Spleen (tissue), 13 donors: ENCODE measurements at regions of chr19 and their contacts with region 1.

Region 1: GRCh38 chr19:53365134-53365898 is at the start of gene ZNF525:
- DNase-seq: peak; percentile 99
- H3K4me3 ChIP-seq: peak within 1 kb of the TSS; percentile 48 to 90 (median 68)
- H3K27ac ChIP-seq: peak within 1 kb of the TSS; percentile 30 to 88 (median 79)
- H3K4me1 ChIP-seq: peaks cover 0 to 20% (median 14%) of the 10 kb centered on the region in 6 donors
- H3K27me3 ChIP-seq: no peaks in the 10 kb centered on the region
- CTCF ChIP-seq: peak in 9 of 11 experiments; percentile 8 to 80 (median 62)
- POLR2A ChIP-seq: no peak
- total RNA-seq, gene ZNF525: 7.9 to 20.6 (median 15.3) TPM

Region 2: GRCh38 chr19:53195265-53195903 is 169.9 kb before region 1 on chr19:
- intact Hi-C with region 1: loop called (anchors 10 kb)
- DNase-seq: peak; percentile 75
- H3K4me3 ChIP-seq: no peak overlapping the region
- H3K27ac ChIP-seq: no peak overlapping the region
- H3K4me1 ChIP-seq: peaks cover 4 to 48% (median 30%) of the 10 kb centered on the region in 6 donors
- H3K27me3 ChIP-seq: no peaks in the 10 kb centered on the region
- CTCF ChIP-seq: peak; percentile 76 to 95 (median 90)
- POLR2A ChIP-seq: no peak

Region 3: DNA sequence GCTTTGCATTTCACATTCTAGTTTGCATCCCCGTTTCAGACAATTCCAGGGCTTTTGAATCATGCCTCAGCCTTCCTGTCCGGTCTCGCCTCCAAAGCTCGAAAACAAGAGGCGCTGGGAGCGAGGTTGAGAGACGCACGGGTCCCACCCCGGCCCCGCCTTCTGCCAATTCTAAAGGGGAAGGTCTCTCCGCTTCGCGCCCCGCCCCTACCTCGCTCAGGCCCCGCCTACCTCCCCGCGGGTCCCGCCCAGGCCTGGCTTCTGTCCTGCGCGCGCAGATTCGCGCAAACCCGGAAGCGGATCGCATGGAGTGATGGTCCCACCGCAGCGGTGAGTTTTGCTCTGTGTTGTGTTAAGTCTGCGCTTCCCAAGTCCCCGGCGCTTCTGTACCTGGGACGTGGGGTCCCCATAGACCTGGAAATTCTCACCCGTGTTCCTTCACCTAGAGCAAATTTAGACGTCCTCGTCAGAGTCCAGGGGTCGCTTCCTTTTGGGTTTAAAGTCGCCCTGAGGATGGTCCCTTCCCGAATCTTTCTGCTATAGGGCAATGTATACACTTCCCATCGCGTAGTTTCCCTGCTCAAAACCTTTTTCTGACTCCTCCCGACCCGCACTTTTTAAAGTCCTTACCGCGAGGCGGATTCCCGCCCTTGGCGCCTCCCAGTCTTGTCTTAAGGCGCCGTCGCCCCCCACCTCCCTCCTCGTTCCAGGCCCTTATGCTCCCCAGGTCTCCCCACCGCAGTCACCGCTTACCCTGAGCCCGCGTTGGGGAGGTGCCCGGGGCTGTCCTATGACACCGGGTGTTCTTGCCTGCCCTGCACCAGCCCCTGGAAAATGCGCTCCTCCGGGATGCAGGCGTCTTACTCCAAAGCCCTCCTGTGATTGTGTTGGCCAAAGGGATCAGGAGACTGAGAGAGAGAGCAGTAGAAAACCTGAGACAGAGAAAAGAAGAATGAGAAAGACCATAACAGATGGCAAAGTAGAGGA is 31.6 kb before region 1 on chr19 and contains the start of gene ZNF845:
- intact Hi-C with region 1: no loop called
- DNase-seq: peak; percentile 98
- H3K4me3 ChIP-seq: peak within 1 kb of the TSS; percentile 60 to 90 (median 74)
- H3K27ac ChIP-seq: peak within 1 kb of the TSS; percentile 32 to 83 (median 74)
- H3K4me1 ChIP-seq: peaks cover 0 to 33% (median 24%) of the 10 kb centered on the region in 6 donors
- H3K27me3 ChIP-seq: peaks cover 0 to 5% (median 0%) of the 10 kb centered on the region in 7 donors
- CTCF ChIP-seq: no peak
- POLR2A ChIP-seq: no peak
- total RNA-seq, gene ZNF845: 7.1 to 10.5 (median 8.6) TPM